ENCODE measurements at regions of chr1 and their contacts with region 1.

Region 1: GRCh38 chr1:152047730-152048402 is 11.1 kb upstream of the S100A11 start:
- H3K4me3 Mint-ChIP-seq: peak overlapping the region; percentile 76
- H3K27ac Mint-ChIP-seq: peak overlapping the region; percentile 96
- H3K4me1 Mint-ChIP-seq: peaks cover 59% of the 10 kb centered on the region
- H3K27me3 Mint-ChIP-seq: peaks cover 3% of the 10 kb centered on the region

Region 2: GRCh38 chr1:151425103-151425502 is 622.8 kb before region 1 on chr1:
- intact Hi-C with region 1: no loop called
- H3K4me3 Mint-ChIP-seq: no peak overlapping the region
- H3K27ac Mint-ChIP-seq: no peak overlapping the region
- H3K4me1 Mint-ChIP-seq: no peaks in the 10 kb centered on the region
- H3K27me3 Mint-ChIP-seq: no peaks in the 10 kb centered on the region

Region 3: GRCh38 chr1:151762941-151763921 is 284.6 kb before region 1 on chr1 and contains the start of gene MRPL9:
- intact Hi-C with region 1: no loop called
- H3K4me3 Mint-ChIP-seq: peak within 1 kb of the TSS; percentile 91
- H3K27ac Mint-ChIP-seq: peak within 1 kb of the TSS; percentile 94
- H3K4me1 Mint-ChIP-seq: peaks cover 50% of the 10 kb centered on the region
- H3K27me3 Mint-ChIP-seq: no peaks in the 10 kb centered on the region

Region 4: GRCh38 chr1:152013664-152014237 is 34.1 kb before region 1 on chr1:
- intact Hi-C with region 1: no loop called
- H3K4me3 Mint-ChIP-seq: no peak overlapping the region
- H3K27ac Mint-ChIP-seq: no peak overlapping the region
- H3K4me1 Mint-ChIP-seq: peaks cover 26% of the 10 kb centered on the region
- H3K27me3 Mint-ChIP-seq: peaks cover 10% of the 10 kb centered on the region

Region 5: DNA sequence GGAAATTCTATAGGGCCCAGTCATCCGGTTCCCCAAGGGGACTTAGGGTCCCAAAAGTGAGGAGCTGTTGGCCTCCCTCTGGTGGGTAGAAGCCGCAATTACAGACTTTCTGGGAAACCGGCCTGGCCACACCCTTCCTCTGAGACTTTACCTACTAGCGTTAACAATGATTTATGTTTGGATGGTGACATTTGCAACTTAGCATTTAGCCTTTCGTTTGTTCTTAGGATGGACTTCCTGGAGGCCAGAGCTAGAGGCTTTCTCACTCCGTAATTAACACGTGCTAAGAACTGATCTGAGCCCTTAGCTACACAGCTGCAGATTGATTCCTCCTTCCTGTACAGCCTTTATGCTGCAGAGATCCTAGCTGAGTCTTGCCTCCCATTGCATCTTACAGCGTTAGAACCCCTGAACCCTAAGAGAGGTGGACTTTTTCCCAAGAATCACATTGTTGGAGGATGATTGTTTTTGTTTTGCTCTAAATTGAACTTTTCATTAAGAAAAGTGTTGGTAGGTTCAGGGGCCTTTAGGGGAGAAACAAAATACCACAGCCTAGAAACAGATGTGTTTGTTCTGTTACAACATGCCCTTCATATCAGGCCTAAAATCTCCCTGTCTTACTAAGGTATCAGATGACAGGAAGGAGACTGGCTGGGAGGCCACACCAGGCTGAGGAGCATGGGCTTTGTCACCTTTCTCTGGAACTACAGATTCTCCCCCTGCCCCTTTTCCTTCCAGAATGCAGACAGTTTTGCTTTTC is 13.0 kb before region 1 on chr1:
- intact Hi-C with region 1: loop called (anchors 1 kb)
- H3K4me3 Mint-ChIP-seq: peak overlapping the region; percentile 97
- H3K27ac Mint-ChIP-seq: peak overlapping the region; percentile 100
- H3K4me1 Mint-ChIP-seq: peaks cover 32% of the 10 kb centered on the region
- H3K27me3 Mint-ChIP-seq: no peaks in the 10 kb centered on the region

Region 6: GRCh38 chr1:152109998-152110859 is 62.4 kb after region 1 on chr1:
- intact Hi-C with region 1: loop called (anchors 5 kb)
- H3K4me3 Mint-ChIP-seq: no peak overlapping the region
- H3K27ac Mint-ChIP-seq: no peak overlapping the region
- H3K4me1 Mint-ChIP-seq: no peaks in the 10 kb centered on the region
- H3K27me3 Mint-ChIP-seq: peaks cover 22% of the 10 kb centered on the region

Region 7: DNA sequence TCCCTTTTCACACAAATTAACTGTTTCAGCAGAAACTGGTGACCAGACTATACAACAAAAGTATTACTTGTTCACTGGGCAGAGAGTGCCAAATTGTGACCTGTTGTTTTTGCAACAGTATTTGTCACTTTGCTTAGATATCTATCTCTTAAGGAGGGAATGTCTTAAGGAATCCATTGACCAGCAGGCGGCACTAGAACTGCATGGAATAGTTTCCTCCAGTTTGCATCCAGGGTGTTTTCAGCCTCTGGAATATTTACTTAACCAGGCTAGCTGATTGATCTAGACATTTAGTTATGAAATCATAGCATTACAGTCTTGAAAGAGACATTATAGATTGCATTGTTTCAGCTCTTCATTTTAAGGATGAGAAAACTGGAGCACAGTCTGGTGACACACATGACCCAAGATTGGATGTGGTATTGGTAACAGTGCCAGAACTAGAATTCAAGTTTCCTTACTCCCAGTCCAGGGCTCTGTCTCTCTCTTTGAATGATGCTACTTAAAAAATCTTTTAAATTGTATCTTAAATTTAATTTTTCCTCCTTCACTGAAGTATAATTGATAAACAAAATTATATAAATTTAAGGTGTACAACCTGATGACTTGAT is 94.2 kb after region 1 on chr1:
- intact Hi-C with region 1: loop called (anchors 2 kb)
- H3K4me3 Mint-ChIP-seq: no peak overlapping the region
- H3K27ac Mint-ChIP-seq: no peak overlapping the region
- H3K4me1 Mint-ChIP-seq: peaks cover 19% of the 10 kb centered on the region
- H3K27me3 Mint-ChIP-seq: peaks cover 29% of the 10 kb centered on the region

Region 8: DNA sequence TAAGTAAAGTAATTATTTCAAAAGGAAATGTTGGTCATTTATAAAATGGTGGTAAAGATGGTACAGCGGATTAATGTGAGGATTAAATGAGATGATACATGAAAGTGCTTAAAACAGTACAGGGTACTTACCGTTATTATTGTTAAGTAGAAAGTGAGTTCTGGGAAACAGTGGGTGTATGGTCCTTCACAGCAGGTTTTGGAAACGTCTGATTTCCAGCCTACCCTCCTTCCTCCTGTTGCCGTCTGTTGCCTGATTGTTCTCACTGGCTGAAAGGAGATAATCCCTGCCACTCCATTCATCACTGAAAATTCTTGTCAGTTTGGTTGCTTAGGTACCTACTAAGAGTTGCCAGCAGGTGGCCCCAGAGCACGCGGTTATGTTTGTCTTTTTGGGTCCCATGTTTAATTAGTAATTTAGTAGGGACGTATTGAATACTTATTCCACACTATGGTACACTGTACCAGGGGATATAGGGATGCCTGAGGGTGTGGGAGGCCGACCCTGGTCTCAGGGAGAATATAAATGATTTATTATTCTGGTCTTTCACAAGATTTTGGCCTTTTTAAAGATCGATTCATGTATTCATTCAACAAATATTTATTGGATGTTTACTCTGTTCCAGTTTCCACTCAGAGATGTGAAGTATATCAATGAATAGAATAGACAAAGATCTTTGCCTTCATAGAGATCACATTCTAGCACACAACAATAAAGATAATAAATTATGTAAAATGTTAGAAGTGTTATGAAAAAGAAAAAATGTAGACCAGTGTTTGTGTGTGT is 142.0 kb after region 1 on chr1:
- intact Hi-C with region 1: loop called (anchors 1 kb)
- H3K4me3 Mint-ChIP-seq: no peak overlapping the region
- H3K27ac Mint-ChIP-seq: no peak overlapping the region
- H3K4me1 Mint-ChIP-seq: peaks cover 7% of the 10 kb centered on the region
- H3K27me3 Mint-ChIP-seq: peaks cover 29% of the 10 kb centered on the region

Region 9: DNA sequence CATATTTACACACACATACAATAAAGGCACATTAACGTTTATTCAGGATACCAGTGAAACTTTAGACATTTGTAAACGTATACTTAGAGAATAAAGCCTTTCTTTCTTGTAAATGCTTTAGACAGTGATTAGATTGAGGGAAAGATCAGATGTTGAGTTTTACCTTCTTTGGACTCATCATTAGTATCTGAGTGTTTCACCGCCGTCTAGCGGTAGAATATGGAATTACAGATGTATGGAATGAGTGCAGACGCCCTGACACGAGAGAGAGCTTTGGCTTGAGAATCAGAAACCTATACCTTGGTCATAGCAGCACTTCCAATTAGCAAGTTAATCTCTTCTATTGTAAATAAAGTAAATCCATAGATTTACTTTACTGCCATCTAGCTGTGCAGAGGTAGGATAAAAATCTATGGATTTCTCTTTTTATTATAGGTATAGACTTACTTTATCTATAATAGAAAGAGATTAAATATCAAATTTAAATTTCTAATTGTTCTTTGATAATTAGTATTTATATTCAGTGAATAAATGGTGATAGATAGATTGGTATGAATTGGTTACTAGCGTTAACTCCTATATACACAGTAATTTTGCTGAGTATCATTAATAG is 299.4 kb after region 1 on chr1:
- intact Hi-C with region 1: loop called (anchors 5 kb)
- H3K4me3 Mint-ChIP-seq: no peak overlapping the region
- H3K27ac Mint-ChIP-seq: no peak overlapping the region
- H3K4me1 Mint-ChIP-seq: no peaks in the 10 kb centered on the region
- H3K27me3 Mint-ChIP-seq: peaks cover 16% of the 10 kb centered on the region

Region 10: GRCh38 chr1:152459596-152460528 is 412.0 kb after region 1 on chr1:
- intact Hi-C with region 1: loop called (anchors 5 kb)
- H3K4me3 Mint-ChIP-seq: peak overlapping the region; percentile 65
- H3K27ac Mint-ChIP-seq: peak overlapping the region; percentile 78
- H3K4me1 Mint-ChIP-seq: peaks cover 22% of the 10 kb centered on the region
- H3K27me3 Mint-ChIP-seq: peaks cover 18% of the 10 kb centered on the region